GM12878 (cell line): ENCODE measurements at regions of chr5 and their contacts with region 1.

Region 1: DNA sequence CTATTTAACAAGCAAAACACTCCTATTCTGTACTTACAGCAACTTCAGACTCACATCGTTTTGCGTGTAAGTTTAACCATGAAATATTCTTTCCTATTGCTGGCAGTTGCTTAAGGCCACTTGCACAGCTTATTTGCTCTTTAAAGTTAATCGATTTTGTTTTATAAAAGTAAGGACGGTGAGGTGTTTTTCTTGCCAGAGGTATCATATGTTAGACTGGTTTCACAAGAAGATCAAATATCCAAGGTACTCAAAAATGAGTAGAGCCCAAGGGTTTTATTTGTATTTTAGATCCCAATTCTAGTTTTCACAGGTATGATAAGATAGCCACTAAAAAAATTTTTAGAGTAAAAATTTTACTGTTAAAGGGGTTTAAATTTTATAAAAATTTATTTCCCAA is 16.2 kb downstream of the CLINT1 start:
- DNase-seq: no peak
- ATAC-seq: no peak
- H3K4me3 ChIP-seq: no peak overlapping the region
- H3K27ac ChIP-seq: no peak overlapping the region
- H3K4me1 ChIP-seq: no peaks in the 10 kb centered on the region
- H3K27me3 ChIP-seq: no peaks in the 10 kb centered on the region
- CTCF ChIP-seq: no peak
- EP300 ChIP-seq: no peak
- POLR2A ChIP-seq: no peak
- RAD21 ChIP-seq: no peak

Region 2: GRCh38 chr5:157384971-157385709 is 457.6 kb before region 1 on chr5:
- CTCF ChIA-PET with region 1: no interaction called
- POLR2A ChIA-PET with region 1: no interaction called
- RAD21 ChIA-PET with region 1: no interaction called
- SMC1A ChIA-PET with region 1: no interaction called
- in situ Hi-C with region 1: no loop called
- intact Hi-C with region 1: no loop called
- DNase-seq: no peak
- ATAC-seq: no peak
- H3K4me3 ChIP-seq: no peak overlapping the region
- H3K27ac ChIP-seq: no peak overlapping the region
- H3K4me1 ChIP-seq: no peaks in the 10 kb centered on the region
- H3K27me3 ChIP-seq: no peaks in the 10 kb centered on the region
- CTCF ChIP-seq: no peak
- EP300 ChIP-seq: no peak
- POLR2A ChIP-seq: no peak
- RAD21 ChIP-seq: no peak

Region 3: DNA sequence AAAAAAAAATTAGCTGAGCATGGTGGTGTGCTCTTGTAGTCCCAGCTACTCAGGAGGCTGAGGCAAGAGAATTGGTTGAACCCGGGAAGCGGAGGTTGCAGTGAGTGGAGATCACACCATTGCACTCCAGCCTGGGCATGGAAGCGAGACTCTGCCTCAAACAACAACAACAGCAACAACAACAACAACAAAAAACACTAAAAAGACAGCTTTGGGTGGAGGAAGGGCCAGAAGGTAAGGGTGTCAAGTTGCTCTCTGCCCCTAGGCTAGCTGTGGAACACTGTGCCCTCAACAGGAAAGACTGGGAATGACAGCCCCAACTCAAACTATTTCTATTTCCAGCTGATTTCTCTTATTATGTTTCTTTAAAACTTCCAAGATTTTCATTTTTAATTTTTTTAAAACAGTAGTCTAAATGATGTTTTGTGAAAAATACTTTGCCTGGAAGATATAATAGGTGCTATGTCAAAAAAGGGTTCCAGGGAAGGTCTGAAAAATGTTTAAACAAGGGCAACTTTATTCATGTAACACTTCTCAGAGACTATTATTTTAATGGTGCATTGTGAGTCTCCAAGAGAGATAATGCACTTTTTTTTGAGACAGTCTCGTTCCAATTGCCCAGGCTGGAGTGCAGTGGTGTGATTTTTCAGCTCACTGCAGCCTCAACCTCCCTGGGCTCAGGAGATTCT is 13.7 kb before region 1 on chr5:
- CTCF ChIA-PET with region 1: interaction called, 10 read pairs
- POLR2A ChIA-PET with region 1: interaction called, 9 read pairs
- RAD21 ChIA-PET with region 1: no interaction called
- SMC1A ChIA-PET with region 1: interaction called, 3 read pairs
- in situ Hi-C with region 1: no loop called
- intact Hi-C with region 1: no loop called
- DNase-seq: no peak
- ATAC-seq: peak; percentile 71
- H3K4me3 ChIP-seq: no peak overlapping the region
- H3K27ac ChIP-seq: no peak overlapping the region
- H3K4me1 ChIP-seq: peaks cover 8% of the 10 kb centered on the region
- H3K27me3 ChIP-seq: no peaks in the 10 kb centered on the region
- CTCF ChIP-seq: peak; percentile 34 to 52 (median 35); a peak in 5 of 6 replicates
- EP300 ChIP-seq: no peak
- POLR2A ChIP-seq: no peak
- RAD21 ChIP-seq: no peak

Region 4: GRCh38 chr5:158287643-158288271 is 445.0 kb after region 1 on chr5:
- CTCF ChIA-PET with region 1: no interaction called
- POLR2A ChIA-PET with region 1: no interaction called
- RAD21 ChIA-PET with region 1: no interaction called
- SMC1A ChIA-PET with region 1: no interaction called
- in situ Hi-C with region 1: no loop called
- intact Hi-C with region 1: no loop called
- DNase-seq: no peak
- ATAC-seq: no peak
- H3K4me3 ChIP-seq: no peak overlapping the region
- H3K27ac ChIP-seq: no peak overlapping the region
- H3K4me1 ChIP-seq: no peaks in the 10 kb centered on the region
- H3K27me3 ChIP-seq: no peaks in the 10 kb centered on the region
- CTCF ChIP-seq: no peak
- EP300 ChIP-seq: no peak
- POLR2A ChIP-seq: no peak
- RAD21 ChIP-seq: no peak